ENCODE measurements at regions of chr10 and their contacts with region 1.

Region 1: GRCh38 chr10:69786791-69787190 is 14.9 kb upstream of the COL13A1 start:
- H3K4me3 ChIP-seq: no peak overlapping the region
- H3K27ac ChIP-seq: no peak overlapping the region
- H3K4me1 ChIP-seq: no peaks in the 10 kb centered on the region
- CTCF ChIP-seq: no peak

Region 2: DNA sequence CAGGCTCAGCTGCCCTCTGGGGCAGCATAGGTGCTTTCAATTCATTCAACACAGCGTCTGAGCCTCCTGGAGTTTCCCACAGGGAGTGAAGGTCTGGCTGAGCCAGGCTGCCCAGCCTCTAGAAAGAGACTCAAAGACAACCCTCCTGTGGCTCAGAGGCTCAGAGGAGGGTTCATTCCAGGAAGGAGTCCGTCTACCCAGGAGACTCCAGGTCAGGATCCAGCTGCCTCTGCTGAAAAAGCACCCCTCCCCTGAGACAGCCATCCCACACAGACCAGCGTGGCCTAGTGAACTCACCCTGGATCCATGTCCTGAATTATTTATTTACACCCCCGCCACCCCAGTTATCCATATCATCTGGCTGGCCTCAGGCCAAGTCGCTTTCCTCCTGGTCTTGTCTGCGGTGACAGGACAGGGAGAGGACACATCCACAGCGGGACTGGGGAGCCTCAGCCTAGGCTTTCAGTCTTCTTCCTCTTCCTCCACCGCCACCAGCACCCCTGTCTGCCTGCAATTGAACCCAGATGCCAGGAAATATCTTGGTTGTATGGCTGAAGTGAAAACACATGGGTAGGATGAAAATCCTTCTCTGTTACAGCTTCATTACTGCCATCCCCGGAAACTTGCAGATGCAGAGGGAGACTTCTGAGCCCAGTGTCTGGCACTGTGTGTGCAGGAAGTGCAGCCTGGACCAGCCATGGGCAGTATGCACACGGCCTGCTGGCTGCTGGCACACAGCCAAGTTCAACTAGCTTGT is 29.1 kb before region 1 on chr10:
- CTCF ChIA-PET with region 1: interaction called, 13 read pairs
- POLR2A ChIA-PET with region 1: no interaction called
- H3K4me3 ChIP-seq: no peak overlapping the region
- H3K27ac ChIP-seq: no peak overlapping the region
- H3K4me1 ChIP-seq: peaks cover 9% of the 10 kb centered on the region; the same call in 1 of the 2 replicates
- CTCF ChIP-seq: no peak

Region 3: DNA sequence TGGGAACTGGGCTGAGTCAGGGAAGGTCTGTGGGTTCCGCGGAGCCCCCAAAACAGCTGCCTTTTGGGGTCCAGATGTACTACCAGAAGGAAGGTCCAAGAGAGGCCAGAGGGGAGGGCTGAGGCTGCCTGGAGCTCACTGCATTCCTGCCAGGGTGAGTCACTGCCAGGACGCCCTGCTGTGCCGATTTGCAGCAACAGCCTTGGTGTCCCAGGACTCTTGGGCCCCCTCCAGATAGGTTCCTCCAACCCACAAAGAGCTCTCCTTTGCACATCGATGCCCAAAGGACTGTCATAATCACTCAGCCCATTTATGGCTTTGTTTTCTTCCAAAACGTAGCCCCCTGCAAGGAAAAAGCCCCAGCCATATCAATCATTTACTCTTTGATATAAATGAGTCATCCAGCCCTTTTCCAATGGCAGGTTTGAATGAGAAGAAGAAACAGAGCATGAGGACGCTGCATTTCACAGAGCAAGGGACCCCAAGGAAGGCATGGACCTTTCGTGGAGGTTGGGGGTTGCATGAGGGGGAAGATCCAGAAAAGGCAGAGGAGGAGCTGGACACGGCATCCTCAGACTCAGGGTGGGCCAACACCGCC is 17.3 kb before region 1 on chr10:
- CTCF ChIA-PET with region 1: interaction called, 14 read pairs
- POLR2A ChIA-PET with region 1: no interaction called
- H3K4me3 ChIP-seq: no peak overlapping the region
- H3K27ac ChIP-seq: no peak overlapping the region
- H3K4me1 ChIP-seq: peaks cover 5% of the 10 kb centered on the region
- CTCF ChIP-seq: no peak

Measured in HEK293 (cell line).